Activated CD4-positive, alpha-beta T cell treated with anti-CD3 and anti-CD28 coated beads for 36 hours (primary cell): ENCODE measurements at regions of chr9 and their contacts with region 1.

Region 1: DNA sequence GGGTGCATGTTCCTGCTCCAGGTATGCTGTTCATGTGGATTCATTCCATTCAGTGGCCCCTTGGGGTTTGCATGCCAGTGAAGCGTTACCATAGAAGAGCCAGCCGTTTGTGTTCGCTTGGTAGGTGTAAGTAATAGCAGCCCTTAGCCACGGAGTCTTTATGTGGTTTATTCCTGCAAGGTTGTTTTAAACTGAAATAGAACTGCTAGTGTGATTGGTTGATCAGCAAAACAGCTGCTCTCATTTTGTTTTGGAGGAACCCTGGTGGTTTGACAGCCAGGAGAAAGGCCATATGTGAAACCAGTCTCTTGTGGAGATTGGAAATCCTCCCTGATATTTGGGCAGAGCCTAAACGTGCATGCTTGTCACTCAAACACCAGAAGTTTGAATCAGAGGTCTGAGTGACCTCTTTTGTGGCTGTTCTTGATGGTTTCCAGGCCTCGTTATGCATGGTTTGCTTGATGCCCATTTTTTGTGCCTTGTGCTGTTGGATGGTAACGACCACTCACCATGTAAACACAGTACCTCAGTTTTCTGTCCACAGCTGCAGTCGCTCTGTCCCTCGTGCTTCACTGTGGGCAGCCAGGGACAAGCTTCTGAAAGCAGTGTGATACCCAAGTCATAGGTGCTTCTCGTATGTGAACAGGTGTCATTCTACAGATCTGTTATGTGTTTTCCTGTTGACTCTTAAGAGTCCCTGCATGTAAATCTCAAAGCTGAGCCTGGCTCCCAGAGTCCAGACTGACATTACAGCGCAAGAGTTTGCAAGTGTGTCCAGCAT is 58.3 kb upstream of the NXNL2 start:
- DNase-seq: peak; percentile 18
- ATAC-seq: peak; percentile 62
- H3K4me3 Mint-ChIP-seq: no peak overlapping the region
- H3K27ac Mint-ChIP-seq: peak overlapping the region; percentile 51
- H3K4me1 Mint-ChIP-seq: peaks cover 20% of the 10 kb centered on the region
- H3K27me3 Mint-ChIP-seq: no peaks in the 10 kb centered on the region

Region 2: GRCh38 chr9:87535817-87536539 is 940.7 kb before region 1 on chr9:
- CTCF ChIA-PET with region 1: no interaction called
- POLR2A ChIA-PET with region 1: no interaction called
- intact Hi-C with region 1: loop called in 1 of 2 experiments (anchors 5 kb)
- DNase-seq: peak; percentile 69
- ATAC-seq: peak; percentile 84
- H3K4me3 Mint-ChIP-seq: peak overlapping the region; percentile 5
- H3K27ac Mint-ChIP-seq: peak overlapping the region; percentile 91
- H3K4me1 Mint-ChIP-seq: peaks cover 13% of the 10 kb centered on the region
- H3K27me3 Mint-ChIP-seq: no peaks in the 10 kb centered on the region

Region 3: DNA sequence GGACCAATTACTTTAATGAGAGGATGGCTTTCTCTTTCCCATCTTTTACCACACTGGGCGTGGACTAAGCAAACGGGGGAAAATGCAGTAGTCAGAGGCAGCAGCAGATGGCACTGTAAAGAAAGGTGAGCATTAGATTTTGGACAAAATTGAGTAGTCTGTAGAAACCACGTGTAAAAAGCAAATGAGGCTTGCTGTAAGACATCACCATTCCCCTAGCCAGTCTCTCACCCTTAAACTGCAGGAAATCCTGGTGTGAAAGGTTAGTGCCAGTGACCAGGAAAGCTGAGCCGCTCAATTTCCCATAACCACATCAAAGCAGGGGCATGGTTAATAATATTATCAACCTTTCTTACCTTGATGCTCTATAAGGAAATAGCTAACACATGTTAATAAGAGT is 370.2 kb before region 1 on chr9:
- CTCF ChIA-PET with region 1: no interaction called
- POLR2A ChIA-PET with region 1: no interaction called
- intact Hi-C with region 1: loop called in 1 of 2 experiments (anchors 10 kb)
- DNase-seq: peak; percentile 38
- ATAC-seq: peak; percentile 47
- H3K4me3 Mint-ChIP-seq: no peak overlapping the region
- H3K27ac Mint-ChIP-seq: no peak overlapping the region
- H3K4me1 Mint-ChIP-seq: peaks cover 6% of the 10 kb centered on the region
- H3K27me3 Mint-ChIP-seq: peaks cover 29% of the 10 kb centered on the region

Region 4: GRCh38 chr9:88388172-88388885 is 88.4 kb before region 1 on chr9 and contains the start of gene SPIN1:
- CTCF ChIA-PET with region 1: no interaction called
- POLR2A ChIA-PET with region 1: interaction called, 3 read pairs
- intact Hi-C with region 1: loop called (anchors 1 kb)
- DNase-seq: peak; percentile 92
- ATAC-seq: peak; percentile 83
- H3K4me3 Mint-ChIP-seq: peak within 1 kb of the TSS; percentile 94
- H3K27ac Mint-ChIP-seq: peak within 1 kb of the TSS; percentile 97
- H3K4me1 Mint-ChIP-seq: peaks cover 40% of the 10 kb centered on the region
- H3K27me3 Mint-ChIP-seq: no peaks in the 10 kb centered on the region
- total RNA-seq, gene SPIN1: 17.9 to 22.1 TPM

Region 5: GRCh38 chr9:88460587-88461332 is 15.9 kb before region 1 on chr9:
- CTCF ChIA-PET with region 1: no interaction called
- POLR2A ChIA-PET with region 1: no interaction called
- intact Hi-C with region 1: loop called in 1 of 2 experiments (anchors 1 kb)
- DNase-seq: peak; percentile 57
- ATAC-seq: peak; percentile 98
- H3K4me3 Mint-ChIP-seq: no peak overlapping the region
- H3K27ac Mint-ChIP-seq: peak overlapping the region; percentile 48
- H3K4me1 Mint-ChIP-seq: peaks cover 12% of the 10 kb centered on the region
- H3K27me3 Mint-ChIP-seq: no peaks in the 10 kb centered on the region